ENCODE measurements at regions of chr4 and their contacts with region 1.

Region 1: GRCh38 chr4:56544573-56545131 is 39.1 kb downstream of the ARL9 start:
- DNase-seq: peak; percentile 77 to 95 (median 85)
- ATAC-seq: peak; percentile 99
- H3K4me3 ChIP-seq: peak overlapping the region; percentile 27 to 38
- H3K4me3 Mint-ChIP-seq: peak overlapping the region; percentile 73
- H3K27ac ChIP-seq: no peak overlapping the region
- H3K27ac Mint-ChIP-seq: no peak overlapping the region
- H3K4me1 ChIP-seq: peaks cover 14% of the 10 kb centered on the region
- H3K4me1 Mint-ChIP-seq: peaks cover 15% of the 10 kb centered on the region
- H3K27me3 ChIP-seq: peaks cover 0 to 6% of the 10 kb centered on the region in 2 experiments
- H3K27me3 Mint-ChIP-seq: no peaks in the 10 kb centered on the region
- CTCF ChIP-seq: peak; percentile 98

Region 2: DNA sequence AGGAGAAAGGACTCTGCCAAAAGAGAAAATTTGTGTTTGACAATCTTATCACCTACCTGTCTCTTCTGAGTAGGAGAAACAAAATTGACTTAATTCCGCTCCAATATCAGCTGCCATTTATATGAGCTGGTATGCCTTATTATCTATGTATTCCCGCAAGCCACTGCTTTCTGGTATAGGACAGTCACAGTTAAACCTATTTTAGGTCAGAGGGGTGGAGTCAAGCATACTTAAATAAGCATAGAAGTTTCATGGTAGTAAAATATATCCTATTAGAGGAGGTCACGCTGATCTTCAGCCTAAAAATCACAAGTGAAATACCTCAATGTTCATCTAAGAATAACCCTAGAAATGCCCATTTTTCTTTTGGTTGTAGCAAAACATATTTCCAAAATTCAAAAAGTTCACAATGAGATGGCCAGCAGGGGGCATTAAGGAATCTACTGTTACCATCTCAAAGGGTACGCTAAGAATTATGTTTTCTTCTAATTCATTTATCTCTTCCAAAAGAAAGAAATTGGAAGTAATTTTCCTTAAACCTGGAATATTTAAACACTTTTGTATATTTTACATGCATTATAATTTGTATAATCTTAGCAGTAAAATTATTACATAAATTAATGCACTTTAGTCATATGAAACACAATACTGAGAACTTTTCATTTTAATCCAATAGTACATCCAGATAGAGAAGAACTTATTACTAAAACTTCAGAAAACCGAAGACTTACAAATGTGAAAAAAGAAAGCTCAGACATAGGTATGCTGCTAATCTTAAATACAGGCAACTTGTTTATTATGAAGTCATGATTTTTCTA is 119.7 kb before region 1 on chr4:
- CTCF ChIA-PET with region 1: interaction called, 41 read pairs
- POLR2A ChIA-PET with region 1: interaction called, 4 read pairs
- intact Hi-C with region 1: loop called (anchors 1 kb)
- DNase-seq: peak in 7 of 9 experiments; percentile 21 to 71 (median 52)
- ATAC-seq: peak; percentile 61
- H3K4me3 ChIP-seq: no peak overlapping the region
- H3K4me3 Mint-ChIP-seq: no peak overlapping the region
- H3K27ac ChIP-seq: no peak overlapping the region
- H3K27ac Mint-ChIP-seq: no peak overlapping the region
- H3K4me1 ChIP-seq: no peaks in the 10 kb centered on the region
- H3K4me1 Mint-ChIP-seq: peaks cover 8% of the 10 kb centered on the region
- H3K27me3 ChIP-seq: no peaks in the 10 kb centered on the region
- H3K27me3 Mint-ChIP-seq: no peaks in the 10 kb centered on the region
- CTCF ChIP-seq: peak; percentile 90

Region 3: GRCh38 chr4:56505269-56506130 is 39.2 kb before region 1 on chr4 and contains the start of gene ARL9:
- CTCF ChIA-PET with region 1: interaction called, 5 read pairs
- POLR2A ChIA-PET with region 1: no interaction called
- intact Hi-C with region 1: loop called (anchors 5 kb)
- DNase-seq: peak; percentile 40 to 83 (median 74)
- ATAC-seq: peak; percentile 97
- H3K4me3 ChIP-seq: peak within 1 kb of the TSS; percentile 50 to 70
- H3K4me3 Mint-ChIP-seq: peak within 1 kb of the TSS; percentile 89
- H3K27ac ChIP-seq: peak within 1 kb of the TSS in 1 of 2 experiments; percentile 26
- H3K27ac Mint-ChIP-seq: peak within 1 kb of the TSS; percentile 82
- H3K4me1 ChIP-seq: peaks cover 15% of the 10 kb centered on the region
- H3K4me1 Mint-ChIP-seq: peaks cover 17% of the 10 kb centered on the region
- H3K27me3 ChIP-seq: no peaks in the 10 kb centered on the region
- H3K27me3 Mint-ChIP-seq: peaks cover 2% of the 10 kb centered on the region
- CTCF ChIP-seq: no peak
- total RNA-seq, gene ARL9: 0.19 TPM in 1 of 2 experiments, not detected in the other

Region 4: DNA sequence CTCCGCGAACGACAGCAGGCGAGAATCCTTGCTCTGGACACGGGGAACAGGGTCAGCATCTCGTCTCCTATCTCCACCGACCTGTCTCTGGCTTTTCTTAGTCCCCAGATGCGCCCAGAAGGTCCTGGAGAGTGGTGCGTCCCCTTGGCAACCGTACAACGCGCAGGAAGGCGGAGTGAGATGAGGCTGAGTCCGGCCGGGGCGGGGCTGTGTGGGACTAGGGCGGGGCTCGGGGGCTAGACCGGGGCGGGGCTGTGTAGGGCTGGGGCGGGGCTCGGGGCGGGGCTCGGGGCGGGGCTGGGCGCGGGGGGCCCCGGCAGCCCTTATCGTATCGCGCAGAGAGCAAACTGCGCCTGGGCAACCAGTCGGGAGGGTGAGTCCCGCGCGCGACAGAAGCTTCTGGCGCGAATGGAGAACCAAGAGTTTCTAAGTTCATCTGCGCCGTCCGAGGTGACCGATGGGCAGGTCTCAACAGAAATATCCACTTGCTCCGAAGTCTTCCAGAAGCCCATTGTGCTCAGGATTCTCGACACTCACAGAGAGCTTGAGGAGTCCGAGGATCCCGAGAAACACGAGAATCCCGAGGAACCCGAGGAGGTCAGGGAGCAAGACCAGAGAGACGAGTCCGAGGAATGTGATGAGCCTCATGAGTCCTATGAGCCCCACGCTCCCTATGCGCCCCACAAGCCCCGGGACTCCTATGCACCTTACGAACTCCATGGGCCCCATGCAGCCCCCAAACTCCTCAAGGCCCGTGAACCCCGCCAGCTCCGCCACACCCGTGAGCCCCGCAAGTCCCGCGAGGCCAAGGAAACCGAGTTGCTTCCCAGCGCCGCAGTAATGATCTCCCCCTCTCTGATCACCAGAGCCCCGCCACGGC is 14.1 kb before region 1 on chr4:
- CTCF ChIA-PET with region 1: interaction called, 18 read pairs
- POLR2A ChIA-PET with region 1: no interaction called
- intact Hi-C with region 1: loop called in 1 of 2 experiments (anchors 1 kb)
- DNase-seq: peak; percentile 51 to 86 (median 81)
- ATAC-seq: peak; percentile 96
- H3K4me3 ChIP-seq: peak overlapping the region; percentile 59 to 87
- H3K4me3 Mint-ChIP-seq: no peak overlapping the region
- H3K27ac ChIP-seq: no peak overlapping the region
- H3K27ac Mint-ChIP-seq: no peak overlapping the region
- H3K4me1 ChIP-seq: peaks cover 6% of the 10 kb centered on the region
- H3K4me1 Mint-ChIP-seq: no peaks in the 10 kb centered on the region
- H3K27me3 ChIP-seq: peaks cover 3 to 5% of the 10 kb centered on the region in 2 experiments
- H3K27me3 Mint-ChIP-seq: peaks cover 9% of the 10 kb centered on the region
- CTCF ChIP-seq: no peak

Region 5: DNA sequence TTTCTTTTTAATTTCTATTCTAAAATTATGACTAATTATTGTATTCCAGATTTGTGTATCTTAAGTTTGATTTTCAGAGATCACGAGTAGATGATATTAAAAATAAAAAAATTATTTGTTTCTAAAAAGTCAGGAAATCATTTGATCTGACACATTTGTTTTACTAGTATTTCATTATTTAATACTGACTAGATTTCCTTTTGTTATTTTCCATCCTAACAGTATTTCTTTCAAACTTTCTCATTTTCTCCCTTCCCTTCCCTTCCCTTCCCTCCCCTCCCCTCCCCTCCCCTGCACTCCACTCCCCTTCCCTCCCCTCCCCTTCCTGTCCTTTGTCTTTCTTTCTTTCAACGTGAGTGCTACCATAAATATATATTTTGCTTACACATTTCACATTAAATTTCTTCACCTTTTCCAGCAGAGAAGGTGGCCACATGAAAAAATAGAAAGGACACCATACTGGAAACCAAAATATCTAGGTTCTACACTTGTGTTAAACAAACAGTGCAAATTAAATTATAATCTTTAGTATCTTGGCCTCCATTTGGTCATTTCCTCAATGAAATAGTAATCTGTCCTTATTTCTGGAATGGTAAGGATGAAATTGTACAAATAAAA is 1978.2 kb after region 1 on chr4:
- CTCF ChIA-PET with region 1: no interaction called
- POLR2A ChIA-PET with region 1: no interaction called
- intact Hi-C with region 1: no loop called
- DNase-seq: no peak
- ATAC-seq: no peak
- H3K4me3 ChIP-seq: no peak overlapping the region
- H3K4me3 Mint-ChIP-seq: no peak overlapping the region
- H3K27ac ChIP-seq: no peak overlapping the region
- H3K27ac Mint-ChIP-seq: no peak overlapping the region
- H3K4me1 ChIP-seq: no peaks in the 10 kb centered on the region
- H3K4me1 Mint-ChIP-seq: no peaks in the 10 kb centered on the region
- H3K27me3 ChIP-seq: no peaks in the 10 kb centered on the region
- H3K27me3 Mint-ChIP-seq: no peaks in the 10 kb centered on the region
- CTCF ChIP-seq: no peak

Measured in CD8-positive, alpha-beta T cell (primary cell).